PC-9 (cell line): ENCODE measurements at regions of chr14 and their contacts with region 1.

Region 1: GRCh38 chr14:68506021-68506644 is 286.7 kb downstream of the ZFP36L1 start:
- DNase-seq: peak; percentile 52 to 58
- H3K4me3 ChIP-seq: no peak overlapping the region
- H3K27ac ChIP-seq: no peak overlapping the region
- H3K4me1 ChIP-seq: peaks cover 18% of the 10 kb centered on the region; the same call in 1 of the 2 replicates
- H3K27me3 ChIP-seq: no peaks in the 10 kb centered on the region
- CTCF ChIP-seq: no peak

Region 2: DNA sequence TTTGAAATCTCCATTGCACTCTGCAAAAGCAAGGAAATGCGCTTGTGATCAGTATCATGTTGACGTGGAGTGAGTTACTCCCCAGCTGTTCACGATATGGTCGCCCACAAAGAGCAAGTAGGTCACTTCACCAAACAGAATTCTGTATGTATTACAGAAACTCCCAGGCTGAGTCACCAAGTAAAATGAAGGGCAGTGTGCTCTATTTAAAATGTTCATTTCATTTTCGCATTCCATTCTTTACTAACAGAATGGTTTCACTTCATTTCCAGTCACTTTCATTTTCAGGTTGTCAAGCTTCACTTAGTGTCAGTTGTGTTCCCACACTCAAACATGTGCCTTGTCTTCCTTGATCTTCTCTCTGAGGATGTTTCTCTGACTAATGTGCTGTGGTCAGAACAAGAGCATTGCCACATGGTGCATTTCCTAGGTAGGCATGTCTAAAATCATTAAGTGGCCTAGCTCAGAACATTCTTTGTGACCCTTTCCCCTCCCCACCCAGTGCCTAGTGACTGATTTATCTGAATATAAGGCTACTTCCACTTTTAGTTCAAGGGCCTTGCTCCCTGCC is 295.3 kb before region 1 on chr14:
- CTCF ChIA-PET with region 1: no interaction called
- POLR2A ChIA-PET with region 1: no interaction called
- intact Hi-C with region 1: no loop called
- DNase-seq: peak; percentile 31 to 87
- H3K4me3 ChIP-seq: no peak overlapping the region
- H3K27ac ChIP-seq: peak overlapping the region; percentile 51
- H3K4me1 ChIP-seq: peaks cover 17% of the 10 kb centered on the region
- H3K27me3 ChIP-seq: no peaks in the 10 kb centered on the region
- CTCF ChIP-seq: no peak

Region 3: GRCh38 chr14:68520637-68521556 is 14.8 kb after region 1 on chr14:
- CTCF ChIA-PET with region 1: interaction called, 3 read pairs
- POLR2A ChIA-PET with region 1: interaction called, 12 read pairs
- intact Hi-C with region 1: loop called (anchors 2 kb)
- DNase-seq: peak; percentile 86 to 91
- H3K4me3 ChIP-seq: no peak overlapping the region
- H3K27ac ChIP-seq: peak overlapping the region; percentile 69
- H3K4me1 ChIP-seq: peaks cover 52% of the 10 kb centered on the region
- H3K27me3 ChIP-seq: no peaks in the 10 kb centered on the region
- CTCF ChIP-seq: no peak

Region 4: GRCh38 chr14:68526420-68527105 is 20.4 kb after region 1 on chr14:
- CTCF ChIA-PET with region 1: no interaction called
- POLR2A ChIA-PET with region 1: interaction called, 4 read pairs
- intact Hi-C with region 1: loop called (anchors 2 kb)
- DNase-seq: peak; percentile 71 to 74
- H3K4me3 ChIP-seq: no peak overlapping the region
- H3K27ac ChIP-seq: peak overlapping the region; percentile 87
- H3K4me1 ChIP-seq: peaks cover 45% of the 10 kb centered on the region
- H3K27me3 ChIP-seq: no peaks in the 10 kb centered on the region
- CTCF ChIP-seq: no peak

Region 5: GRCh38 chr14:68563246-68564131 is 57.4 kb after region 1 on chr14:
- CTCF ChIA-PET with region 1: no interaction called
- POLR2A ChIA-PET with region 1: interaction called, 27 read pairs
- intact Hi-C with region 1: no loop called
- DNase-seq: peak in 1 of 2 experiments; percentile 90
- H3K4me3 ChIP-seq: peak overlapping the region; percentile 64
- H3K27ac ChIP-seq: peak overlapping the region; percentile 96
- H3K4me1 ChIP-seq: peaks cover 73% of the 10 kb centered on the region
- H3K27me3 ChIP-seq: no peaks in the 10 kb centered on the region
- CTCF ChIP-seq: no peak